ENCODE measurements at regions of chr14 and their contacts with region 1.

Region 1: GRCh38 chr14:63966407-63966806 is 113.6 kb downstream of the SYNE2 start:
- DNase-seq: no peak
- H3K4me3 ChIP-seq: no peak overlapping the region
- H3K27ac ChIP-seq: no peak overlapping the region
- H3K4me1 ChIP-seq: no peaks in the 10 kb centered on the region
- H3K27me3 ChIP-seq: no peaks in the 10 kb centered on the region
- CTCF ChIP-seq: no peak
- POLR2A ChIP-seq: no peak

Region 2: DNA sequence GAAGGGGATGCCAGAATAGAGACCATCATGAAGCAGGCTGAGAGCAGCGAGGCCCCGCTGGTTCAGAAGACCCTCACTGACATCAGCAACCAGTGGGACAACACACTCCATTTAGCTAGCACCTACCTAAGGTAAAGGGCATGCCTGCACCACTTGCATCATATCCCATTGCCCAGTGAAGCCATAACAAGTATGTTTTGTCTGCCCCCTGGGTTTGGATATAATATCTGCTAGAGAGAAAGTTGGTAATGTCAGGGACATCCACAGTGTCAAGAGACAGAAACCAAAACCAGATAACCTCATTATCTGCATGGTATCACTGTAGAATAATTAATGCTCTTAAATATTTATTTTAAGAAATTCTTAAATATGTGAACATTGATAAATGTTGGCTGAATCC is 60.2 kb after region 1 on chr14:
- intact Hi-C with region 1: no loop called
- DNase-seq: no peak
- H3K4me3 ChIP-seq: no peak overlapping the region
- H3K27ac ChIP-seq: no peak overlapping the region
- H3K4me1 ChIP-seq: no peaks in the 10 kb centered on the region
- H3K27me3 ChIP-seq: no peaks in the 10 kb centered on the region
- CTCF ChIP-seq: no peak
- POLR2A ChIP-seq: no peak

Region 3: DNA sequence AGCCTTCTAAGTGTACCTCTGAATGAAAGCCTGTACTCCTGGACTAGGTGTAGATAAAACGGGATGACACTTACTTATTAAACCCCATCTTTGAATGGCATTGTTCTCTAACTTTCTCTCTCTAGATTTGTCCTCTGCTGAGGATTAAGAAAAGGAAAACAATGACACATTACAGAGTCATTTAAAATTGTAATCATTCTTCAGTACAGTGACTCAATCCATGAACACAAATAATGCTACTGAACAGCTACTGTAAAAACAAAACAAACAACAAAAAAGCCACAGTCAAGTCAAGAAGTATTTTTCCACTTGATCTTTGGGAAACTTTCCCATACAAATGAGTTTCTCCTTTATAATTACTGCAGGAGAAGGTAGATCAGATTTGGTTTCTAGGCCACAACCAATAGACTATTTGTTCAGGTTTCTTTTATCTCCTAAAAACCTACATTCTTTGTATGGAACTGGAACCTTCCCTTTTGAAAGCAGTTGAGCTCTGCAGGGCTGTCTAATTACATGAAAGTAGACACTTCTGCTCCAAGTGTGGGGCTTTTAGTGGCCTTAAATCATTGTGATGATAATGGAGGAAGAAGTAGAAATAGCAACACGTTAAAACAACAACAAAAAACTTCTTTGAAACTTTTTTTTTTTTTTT is 108.7 kb after region 1 on chr14:
- intact Hi-C with region 1: no loop called
- DNase-seq: no peak
- H3K4me3 ChIP-seq: no peak overlapping the region
- H3K27ac ChIP-seq: no peak overlapping the region
- H3K4me1 ChIP-seq: no peaks in the 10 kb centered on the region
- H3K27me3 ChIP-seq: no peaks in the 10 kb centered on the region
- CTCF ChIP-seq: no peak
- POLR2A ChIP-seq: no peak

Region 4: GRCh38 chr14:64202716-64203115 is 236.3 kb after region 1 on chr14:
- intact Hi-C with region 1: loop called (anchors 2 kb)
- DNase-seq: no peak
- H3K4me3 ChIP-seq: no peak overlapping the region
- H3K27ac ChIP-seq: no peak overlapping the region
- H3K4me1 ChIP-seq: no peaks in the 10 kb centered on the region
- H3K27me3 ChIP-seq: no peaks in the 10 kb centered on the region
- CTCF ChIP-seq: no peak
- POLR2A ChIP-seq: no peak